Kidney (tissue), 22 donors: ENCODE measurements at regions of chr16 and their contacts with region 1.

Region 1: GRCh38 chr16:86563489-86564345 is 2.9 kb upstream of the FOXC2 start:
- DNase-seq: peak; percentile 93 to 96 (median 95)
- H3K4me3 ChIP-seq: peak overlapping the region; percentile 40 to 42 (median 42)
- H3K27ac ChIP-seq: peak overlapping the region in 1 of 2 donors; percentile 76
- H3K4me1 ChIP-seq: peaks cover 0 to 5% (median 0%) of the 10 kb centered on the region in 3 donors
- H3K27me3 ChIP-seq: peaks cover 6% of the 10 kb centered on the region
- CTCF ChIP-seq: peak; percentile 99

Region 2: GRCh38 chr16:86519649-86520316 is 43.9 kb before region 1 on chr16:
- intact Hi-C with region 1: no loop called
- DNase-seq: peak; percentile 63 to 81 (median 74)
- H3K4me3 ChIP-seq: no peak overlapping the region
- H3K27ac ChIP-seq: no peak overlapping the region
- H3K4me1 ChIP-seq: peaks cover 0 to 3% (median 0%) of the 10 kb centered on the region in 3 donors
- H3K27me3 ChIP-seq: peaks cover 34% of the 10 kb centered on the region
- CTCF ChIP-seq: peak; percentile 84

Region 3: DNA sequence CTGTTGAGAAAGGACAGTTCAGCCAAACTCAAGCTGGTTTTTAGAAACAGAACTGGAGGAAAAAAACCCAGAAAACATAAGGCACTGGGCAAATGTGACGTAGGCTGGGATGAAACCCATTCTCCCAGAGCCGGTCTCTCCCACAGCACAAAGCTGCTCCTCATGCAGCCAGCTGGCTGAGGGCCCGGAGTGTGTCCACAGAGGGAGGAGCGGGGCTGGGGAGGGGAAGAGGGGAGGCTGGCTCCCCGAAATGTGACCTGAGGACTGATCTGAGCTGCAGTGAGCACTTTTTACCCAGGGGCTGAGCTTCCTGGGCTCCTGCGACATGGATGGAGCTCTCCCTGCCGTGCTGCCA is 32.5 kb before region 1 on chr16:
- intact Hi-C with region 1: no loop called
- DNase-seq: peak in 1 of 5 donors; percentile 54
- H3K4me3 ChIP-seq: no peak overlapping the region
- H3K27ac ChIP-seq: no peak overlapping the region
- H3K4me1 ChIP-seq: no peaks in the 10 kb centered on the region
- H3K27me3 ChIP-seq: no peaks in the 10 kb centered on the region
- CTCF ChIP-seq: no peak

Region 4: GRCh38 chr16:87062569-87063442 is 499.1 kb after region 1 on chr16:
- intact Hi-C with region 1: loop called (anchors 5 kb)
- DNase-seq: peak; percentile 83 to 95 (median 91)
- H3K4me3 ChIP-seq: peak overlapping the region in 2 of 3 donors; percentile 41 to 45
- H3K27ac ChIP-seq: peak overlapping the region; percentile 13 to 72
- H3K4me1 ChIP-seq: peaks cover 0 to 5% (median 2%) of the 10 kb centered on the region in 3 donors
- H3K27me3 ChIP-seq: no peaks in the 10 kb centered on the region
- CTCF ChIP-seq: peak; percentile 66

Region 5: DNA sequence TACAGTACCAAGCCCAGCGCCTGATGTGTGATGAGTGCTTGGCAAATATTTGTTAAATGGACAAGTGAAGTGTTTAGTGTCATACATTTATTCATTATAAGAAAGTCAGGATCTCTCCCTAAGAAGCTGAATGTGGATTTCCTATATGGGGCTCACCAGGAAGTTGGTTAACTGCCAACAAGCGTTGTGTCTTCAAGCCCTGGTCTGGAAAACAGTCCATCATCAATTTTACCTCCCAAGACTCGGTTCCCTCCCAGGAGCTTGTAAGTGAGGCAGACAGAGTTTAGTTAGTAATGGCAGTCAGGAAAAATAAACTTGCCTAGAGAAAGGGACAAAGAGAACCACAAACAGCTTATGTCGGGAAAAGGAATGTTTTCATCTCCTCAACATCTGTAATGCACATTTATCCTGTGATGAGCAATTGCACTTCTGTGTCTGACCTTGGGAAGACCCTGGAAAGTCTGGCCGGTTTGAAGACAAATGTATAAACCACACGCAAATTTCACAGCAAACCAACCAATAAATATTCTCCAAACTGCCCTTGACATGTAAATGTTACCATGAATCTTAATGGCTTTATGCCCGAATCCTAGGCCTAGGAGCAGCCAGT is 725.1 kb after region 1 on chr16:
- intact Hi-C with region 1: loop called (anchors 10 kb)
- DNase-seq: no peak
- H3K4me3 ChIP-seq: no peak overlapping the region
- H3K27ac ChIP-seq: no peak overlapping the region
- H3K4me1 ChIP-seq: no peaks in the 10 kb centered on the region
- H3K27me3 ChIP-seq: no peaks in the 10 kb centered on the region
- CTCF ChIP-seq: no peak